Head of caudate nucleus (tissue), 42 donors: ENCODE measurements at regions of chr5 and their contacts with region 1.

Region 1: GRCh38 chr5:142063878-142064331 is 44.7 kb upstream of the NDFIP1 start:
- DNase-seq: peak; percentile 88 to 99 (median 97)

Region 2: DNA sequence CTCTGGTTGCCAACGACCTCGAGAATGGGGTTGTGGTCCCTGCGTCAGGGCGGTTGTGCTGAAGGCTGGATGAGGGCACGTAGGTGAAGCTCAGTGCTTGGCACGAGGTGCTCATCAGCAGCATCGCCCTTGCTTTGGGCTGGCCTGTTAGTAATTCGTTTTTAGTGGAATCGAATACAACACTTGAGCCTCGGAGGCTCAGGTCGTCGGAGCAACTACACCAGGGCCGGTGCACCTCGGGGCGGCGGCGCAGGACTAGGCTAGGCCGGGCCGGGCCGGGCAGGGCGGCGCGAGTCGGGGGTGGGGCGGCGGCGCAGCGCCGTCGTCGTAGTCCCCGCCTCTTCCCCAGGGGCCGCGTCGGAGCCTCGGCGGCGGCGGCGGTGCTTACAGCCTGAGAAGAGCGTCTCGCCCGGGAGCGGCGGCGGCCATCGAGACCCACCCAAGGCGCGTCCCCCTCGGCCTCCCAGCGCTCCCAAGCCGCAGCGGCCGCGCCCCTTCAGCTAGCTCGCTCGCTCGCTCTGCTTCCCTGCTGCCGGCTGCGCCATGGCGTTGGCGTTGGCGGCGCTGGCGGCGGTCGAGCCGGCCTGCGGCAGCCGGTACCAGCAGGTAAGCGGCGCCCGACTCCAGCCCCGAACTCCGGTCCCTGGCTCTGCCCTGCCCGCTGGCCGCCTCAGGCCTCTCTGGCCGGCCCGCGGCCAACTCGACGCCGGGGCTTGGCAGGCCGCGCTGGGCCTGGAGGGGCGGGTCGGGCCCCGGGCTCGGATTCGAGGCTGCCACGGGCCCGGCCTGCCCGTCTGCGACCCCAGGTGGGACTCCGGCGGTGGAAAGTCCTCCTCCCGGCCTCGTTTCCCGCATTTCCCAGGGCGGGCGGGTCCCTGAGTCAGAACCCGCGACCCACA is 44.8 kb after region 1 on chr5 and contains the start of gene NDFIP1:
- intact Hi-C with region 1: loop called (anchors 5 kb)
- DNase-seq: peak; percentile 50 to 94 (median 87)